Heart left ventricle (tissue), 16 donors: ENCODE measurements at regions of chr1 and their contacts with region 1.

Region 1: DNA sequence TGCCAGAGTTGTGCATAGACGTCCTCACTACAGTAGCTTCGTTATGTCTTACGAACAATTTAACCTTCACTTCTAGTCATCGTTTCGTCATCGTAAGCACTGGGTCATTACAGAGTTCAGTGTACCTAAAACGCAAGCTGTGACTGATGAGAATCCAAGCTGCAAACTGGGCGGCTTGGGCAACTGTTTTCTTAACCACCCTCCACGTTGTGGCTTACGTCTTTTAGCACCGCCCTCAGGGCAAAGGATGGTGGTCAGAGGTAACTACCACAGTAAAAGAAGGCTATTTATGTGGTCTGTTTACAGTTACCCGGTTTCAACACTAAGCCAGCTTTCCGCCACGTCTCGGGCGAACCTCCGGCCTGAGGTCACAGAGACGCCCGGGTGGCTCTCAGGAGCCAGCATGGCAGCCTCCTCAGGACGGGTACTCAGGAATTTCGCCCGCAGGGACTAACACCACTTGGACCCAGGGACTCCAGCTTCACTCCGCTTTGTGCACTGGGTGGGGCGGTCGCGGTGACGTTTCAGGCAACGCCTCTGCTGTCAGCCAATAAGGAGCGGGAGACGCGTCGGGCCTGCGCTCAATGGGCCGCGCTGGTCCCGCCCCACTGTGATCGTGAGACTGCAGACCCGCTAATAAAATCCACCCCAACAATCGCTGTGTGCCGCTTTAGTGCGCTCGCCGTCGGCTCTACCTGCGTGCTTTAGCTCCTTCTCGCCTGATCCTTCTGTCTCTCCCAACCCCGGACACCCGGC is at the start of gene CTH:
- DNase-seq: peak; percentile 95 to 98 (median 97)
- ATAC-seq: peak; percentile 100
- H3K4me3 ChIP-seq: peak within 1 kb of the TSS; percentile 57 to 88 (median 68)
- H3K27ac ChIP-seq: peak within 1 kb of the TSS; percentile 87 to 96 (median 94)
- H3K4me1 ChIP-seq: peaks cover 0 to 25% (median 13%) of the 10 kb centered on the region in 12 donors
- H3K27me3 ChIP-seq: no peaks in the 10 kb centered on the region
- CTCF ChIP-seq: peak in 1 of 12 donors; percentile 12
- POLR2A ChIP-seq: peak; percentile 65 to 96
- total RNA-seq, gene CTH: 0.74 to 3.9 (median 1.6) TPM

Region 2: DNA sequence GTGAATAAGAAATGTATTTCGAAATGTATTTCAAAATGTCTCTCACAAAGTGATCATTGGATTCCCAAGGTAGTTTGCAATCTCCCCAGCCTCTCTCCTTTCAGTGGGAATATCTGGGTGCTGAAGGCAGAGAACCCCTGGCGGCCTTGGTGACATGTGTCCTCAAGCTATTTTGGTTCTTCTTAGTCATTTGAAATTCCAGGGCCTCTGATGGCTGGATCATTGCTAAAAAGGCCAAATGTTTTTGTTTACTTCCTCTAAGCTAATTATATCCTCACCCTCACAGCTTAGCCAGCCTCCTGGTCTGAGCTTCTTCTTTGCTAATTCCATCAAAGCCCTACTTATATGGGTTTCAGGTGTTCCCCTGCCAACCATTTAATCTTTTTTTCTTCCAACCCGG is 276.6 kb before region 1 on chr1:
- intact Hi-C with region 1: loop called in 1 of 10 experiments (anchors 10 kb)
- DNase-seq: peak in 2 of 5 donors; percentile 10 to 22
- ATAC-seq: peak; percentile 55 to 89 (median 83)
- H3K4me3 ChIP-seq: no peak overlapping the region
- H3K27ac ChIP-seq: peak overlapping the region in 7 of 12 donors; percentile 3 to 46 (median 19)
- H3K4me1 ChIP-seq: peaks cover 0 to 11% (median 3%) of the 10 kb centered on the region in 12 donors
- H3K27me3 ChIP-seq: no peaks in the 10 kb centered on the region
- CTCF ChIP-seq: no peak
- POLR2A ChIP-seq: no peak

Region 3: DNA sequence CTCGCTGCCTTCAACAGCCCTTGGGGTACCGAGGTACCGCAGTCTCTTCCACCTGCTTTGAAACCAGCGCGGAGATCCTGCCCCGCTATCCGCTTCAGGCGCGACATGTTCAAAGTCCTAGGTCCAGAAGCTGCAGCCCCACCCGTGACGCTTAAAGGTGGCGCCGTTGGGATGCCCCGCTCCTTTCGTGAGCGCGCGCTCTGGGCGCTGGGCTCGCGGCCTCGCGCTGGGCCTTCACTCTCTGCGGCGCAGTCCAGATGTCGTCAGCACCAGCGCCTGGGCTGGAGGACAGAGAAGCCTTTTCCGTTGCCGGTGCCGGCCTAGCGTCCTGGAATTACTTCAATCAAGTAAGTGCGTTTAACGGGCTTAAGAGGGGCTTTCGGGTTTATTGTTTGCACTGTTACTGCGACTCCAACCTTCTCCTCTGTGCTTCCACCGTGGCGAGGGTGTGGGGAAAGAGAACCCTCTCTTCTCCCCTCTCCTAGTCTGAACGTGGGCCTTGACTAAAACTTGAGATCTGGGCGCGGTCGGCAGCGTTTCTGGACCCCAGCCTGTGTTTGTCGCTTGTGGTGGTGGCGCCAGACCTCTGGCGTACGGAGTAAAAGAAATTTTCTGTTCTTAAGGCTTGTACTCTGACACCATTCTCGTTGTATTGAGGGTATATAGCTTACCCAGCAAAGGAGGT is 205.2 kb before region 1 on chr1 and contains the start of gene LRRC40:
- intact Hi-C with region 1: loop called in 3 of 10 experiments (anchors 5 to 10 kb)
- DNase-seq: peak; percentile 96 to 97 (median 97)
- ATAC-seq: peak; percentile 97 to 100 (median 99)
- H3K4me3 ChIP-seq: peak within 1 kb of the TSS; percentile 54 to 90 (median 74)
- H3K27ac ChIP-seq: peak within 1 kb of the TSS; percentile 85 to 95 (median 89)
- H3K4me1 ChIP-seq: peaks cover 0 to 63% (median 35%) of the 10 kb centered on the region in 12 donors
- H3K27me3 ChIP-seq: no peaks in the 10 kb centered on the region
- CTCF ChIP-seq: peak in 2 of 12 donors; percentile 5 to 8
- POLR2A ChIP-seq: peak in 1 of 2 donors; percentile 75
- total RNA-seq, gene LRRC40: 8.4 to 13.0 (median 11.2) TPM

Region 4: GRCh38 chr1:70221241-70222121 is 189.3 kb before region 1 on chr1 and contains the start of gene SRSF11:
- intact Hi-C with region 1: loop called in 3 of 10 experiments (anchors 5 to 10 kb)
- DNase-seq: peak; percentile 96 to 98 (median 97)
- ATAC-seq: peak; percentile 98 to 100 (median 100)
- H3K4me3 ChIP-seq: peak within 1 kb of the TSS; percentile 65 to 92 (median 83)
- H3K27ac ChIP-seq: peak within 1 kb of the TSS; percentile 78 to 98 (median 94)
- H3K4me1 ChIP-seq: peaks cover 0 to 56% (median 45%) of the 10 kb centered on the region in 12 donors
- H3K27me3 ChIP-seq: no peaks in the 10 kb centered on the region
- CTCF ChIP-seq: peak in 2 of 12 donors; percentile 14 to 38
- POLR2A ChIP-seq: peak in 1 of 2 donors; percentile 72
- total RNA-seq, gene SRSF11: 27.9 to 73.2 (median 53.6) TPM

Region 5: GRCh38 chr1:70264839-70265238 is 145.9 kb before region 1 on chr1:
- intact Hi-C with region 1: loop called in 1 of 10 experiments (anchors 10 kb)
- DNase-seq: peak in 2 of 5 donors; percentile 19 to 40
- ATAC-seq: peak; percentile 78 to 91 (median 88)
- H3K4me3 ChIP-seq: no peak overlapping the region
- H3K27ac ChIP-seq: peak overlapping the region in 9 of 12 donors; percentile 0 to 72 (median 56)
- H3K4me1 ChIP-seq: peaks cover 0 to 14% (median 7%) of the 10 kb centered on the region in 12 donors
- H3K27me3 ChIP-seq: no peaks in the 10 kb centered on the region
- CTCF ChIP-seq: no peak
- POLR2A ChIP-seq: no peak

Region 6: GRCh38 chr1:70354332-70355110 is 56.3 kb before region 1 on chr1 and contains the start of gene ANKRD13C:
- intact Hi-C with region 1: loop called in 8 of 10 experiments (anchors 1 to 10 kb)
- DNase-seq: peak; percentile 93 to 96 (median 95)
- ATAC-seq: peak; percentile 99
- H3K4me3 ChIP-seq: peak within 1 kb of the TSS; percentile 71 to 95 (median 86)
- H3K27ac ChIP-seq: peak within 1 kb of the TSS; percentile 78 to 96 (median 90)
- H3K4me1 ChIP-seq: peaks cover 0 to 49% (median 35%) of the 10 kb centered on the region in 12 donors
- H3K27me3 ChIP-seq: no peaks in the 10 kb centered on the region
- CTCF ChIP-seq: no peak
- POLR2A ChIP-seq: peak in 1 of 2 donors; percentile 77
- total RNA-seq, gene ANKRD13C: 8.5 to 14.8 (median 11.1) TPM